GM13976 (cell line): ENCODE measurements at regions of chr3 and their contacts with region 1.

Region 1: DNA sequence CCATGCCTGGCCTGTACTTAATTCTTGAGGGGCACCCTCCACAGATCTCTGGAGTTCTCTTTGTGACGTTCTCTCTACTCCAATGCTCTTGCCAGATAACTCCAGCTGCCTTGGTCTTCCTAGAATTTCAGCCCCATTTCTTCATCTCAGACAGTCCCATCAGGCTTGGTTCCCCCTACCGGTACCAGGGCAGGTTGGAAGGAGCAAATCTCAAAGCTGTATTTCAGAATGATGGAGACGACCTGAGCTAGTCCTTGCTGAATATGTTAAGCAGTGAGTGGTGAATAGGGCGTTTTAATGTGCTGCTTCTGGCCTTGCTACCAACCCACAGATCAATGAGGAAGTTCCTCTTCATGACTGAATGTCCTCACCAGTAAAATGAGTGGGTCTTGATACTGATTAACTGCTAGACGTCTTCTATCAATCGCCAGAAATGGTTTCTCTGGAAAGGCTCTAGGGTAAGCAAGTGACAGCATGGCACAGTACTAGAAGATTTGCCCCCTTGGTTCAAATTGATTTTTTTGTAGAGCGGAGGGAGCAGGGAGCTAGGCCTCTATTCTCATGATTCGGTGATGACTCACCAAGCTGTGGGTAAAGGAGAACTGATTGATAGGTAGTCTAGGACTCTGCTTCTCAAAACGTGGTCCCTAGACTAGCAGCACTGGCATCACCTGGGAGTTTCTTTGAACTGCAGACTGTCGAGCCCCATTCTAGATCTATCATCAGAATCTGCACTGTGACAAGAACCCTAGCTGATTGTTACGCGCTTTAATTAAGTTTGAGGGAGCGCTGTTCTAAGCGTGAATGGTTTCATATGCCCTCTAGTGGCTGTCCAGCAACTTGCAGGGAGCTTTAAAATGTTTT is 67.8 kb downstream of the UBP1 start:
- DNase-seq: peak; percentile 58
- CTCF ChIP-seq: peak; percentile 74

Region 2: DNA sequence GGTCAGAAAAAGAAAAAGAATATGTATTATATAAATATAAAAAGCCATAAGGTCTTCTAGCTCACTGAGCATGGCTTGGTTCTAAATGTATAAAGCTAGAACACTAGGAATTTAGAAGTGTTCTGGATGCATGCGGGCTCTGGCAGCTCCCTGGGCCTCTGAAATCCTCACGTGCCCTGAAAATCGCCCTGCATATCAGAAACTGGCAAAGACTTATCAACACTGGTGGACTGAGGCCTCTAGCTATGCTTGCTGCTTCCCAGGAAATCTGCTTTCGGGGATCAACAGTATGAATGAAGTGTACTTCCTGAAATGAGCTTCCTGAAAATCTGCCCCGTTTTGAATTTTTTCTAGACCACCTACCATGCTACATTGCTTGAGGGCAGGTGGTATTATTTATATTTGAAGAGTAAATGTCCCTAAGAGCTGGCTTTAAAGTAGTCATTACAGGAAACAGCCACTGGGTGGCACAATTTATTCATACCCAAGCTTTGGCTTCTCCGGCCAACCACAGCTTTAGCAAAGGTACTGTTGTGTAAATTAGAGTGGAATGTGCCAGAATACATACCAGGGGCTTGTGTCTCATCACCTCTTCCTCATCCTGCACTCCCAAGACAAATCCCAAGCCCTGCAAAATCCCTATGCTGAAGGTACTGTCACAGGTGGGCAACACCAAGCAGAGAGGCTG is 241.0 kb before region 1 on chr3:
- in situ Hi-C with region 1: loop called (anchors 5 kb)
- DNase-seq: peak; percentile 79
- CTCF ChIP-seq: peak; percentile 52